ENCODE measurements at regions of chr6 and their contacts with region 1.

Region 1: DNA sequence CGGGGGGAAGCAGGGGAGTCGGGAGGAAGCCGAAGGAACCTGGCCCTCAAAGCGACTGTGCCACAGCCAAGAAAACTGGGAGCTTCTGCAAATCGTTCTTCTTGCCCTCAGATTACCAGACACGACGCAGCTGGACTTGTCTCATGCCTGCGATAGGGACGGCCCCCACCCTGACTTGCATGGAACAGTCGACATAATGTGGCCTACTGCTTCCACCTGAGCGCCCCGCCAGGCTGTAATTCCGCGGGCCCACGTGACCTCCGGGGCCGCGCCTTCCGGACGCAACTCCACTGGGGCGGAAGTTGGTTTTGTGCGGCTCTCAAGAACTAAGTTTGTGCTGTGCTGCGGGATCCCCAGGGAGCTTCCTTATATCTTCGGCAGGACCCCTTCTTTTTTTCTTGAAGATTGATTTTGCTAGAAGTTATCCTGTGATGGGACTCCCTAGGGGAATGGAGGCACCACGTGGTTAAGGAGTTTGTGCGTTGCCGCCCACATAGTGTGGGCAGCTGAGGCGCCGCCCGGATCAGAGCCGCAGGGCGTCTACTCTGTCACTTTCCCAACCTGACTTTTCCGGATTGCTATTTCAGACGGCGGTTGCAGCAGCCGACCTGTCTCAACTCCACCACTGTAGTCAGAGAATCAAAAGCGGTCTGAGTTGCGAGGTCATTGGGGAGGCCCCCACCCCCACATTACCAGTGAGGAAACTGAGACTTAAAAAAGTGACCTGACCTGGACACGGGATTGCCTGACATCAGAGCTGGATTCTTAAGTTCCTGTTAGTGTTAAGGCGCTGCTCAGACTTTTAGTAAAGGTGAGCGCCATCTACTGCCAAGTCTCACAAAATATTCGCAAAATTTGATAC is 540 bp upstream of the CD164 start:
- DNase-seq: peak; percentile 94
- H3K4me3 ChIP-seq: peak overlapping the region; percentile 50 to 95 (median 83)
- H3K27ac ChIP-seq: peak overlapping the region; percentile 93
- H3K4me1 ChIP-seq: peaks cover 31% of the 10 kb centered on the region
- H3K27me3 ChIP-seq: peaks cover 0 to 3% of the 10 kb centered on the region in 2 experiments
- CTCF ChIP-seq: peak in 1 of 2 donors; percentile 38
- POLR2A ChIP-seq: peak; percentile 87

Region 2: DNA sequence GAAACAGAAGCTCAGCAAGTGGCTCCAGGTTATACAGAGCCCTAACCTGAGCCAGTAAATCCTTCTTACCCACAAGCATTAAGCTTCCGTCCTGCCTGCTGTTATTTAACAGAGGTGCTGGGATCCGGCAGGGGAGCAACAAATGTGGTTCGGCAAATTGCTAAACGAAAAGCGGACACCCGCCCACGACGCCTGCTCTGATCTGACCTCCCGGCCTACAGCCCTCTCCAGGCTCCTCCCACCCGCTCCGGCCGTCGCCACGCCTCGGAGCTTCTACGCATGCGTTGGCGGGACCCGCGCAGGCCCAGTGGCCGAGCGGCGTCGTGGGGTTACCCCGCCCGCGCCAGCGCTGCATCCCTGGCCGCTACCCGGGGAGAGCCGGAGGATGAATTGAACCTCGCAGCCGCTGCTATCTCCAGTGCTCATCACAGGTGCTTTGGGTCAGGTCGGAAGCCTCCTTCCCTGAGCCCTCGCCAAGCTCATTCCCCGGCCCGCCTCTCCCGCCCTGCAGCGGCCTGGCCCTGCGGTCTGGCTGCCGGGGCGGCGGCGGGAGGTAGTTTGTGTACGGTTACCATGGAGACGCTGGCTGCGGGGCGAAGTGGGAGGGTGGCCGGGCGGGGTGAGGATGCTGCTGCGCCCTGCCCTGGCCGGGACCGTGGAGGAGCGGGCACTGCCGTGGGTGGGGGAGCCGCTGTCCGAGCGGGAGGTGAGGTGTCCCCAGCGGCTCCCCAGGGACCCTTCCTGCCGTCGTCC is 534.5 kb before region 1 on chr6 and contains the start of gene ARMC2:
- CTCF ChIA-PET with region 1: no interaction called
- POLR2A ChIA-PET with region 1: no interaction called
- dilution Hi-C with region 1: no loop called
- intact Hi-C with region 1: loop called (anchors 10 kb)
- DNase-seq: peak; percentile 89
- H3K4me3 ChIP-seq: peak within 1 kb of the TSS; percentile 34 to 81 (median 62)
- H3K27ac ChIP-seq: peak within 1 kb of the TSS; percentile 19
- H3K4me1 ChIP-seq: peaks cover 6% of the 10 kb centered on the region
- H3K27me3 ChIP-seq: no peaks in the 10 kb centered on the region
- CTCF ChIP-seq: no peak
- POLR2A ChIP-seq: peak; percentile 67
- total RNA-seq, gene ARMC2: 3.7 and 3.9 TPM in 2 replicates

Region 3: DNA sequence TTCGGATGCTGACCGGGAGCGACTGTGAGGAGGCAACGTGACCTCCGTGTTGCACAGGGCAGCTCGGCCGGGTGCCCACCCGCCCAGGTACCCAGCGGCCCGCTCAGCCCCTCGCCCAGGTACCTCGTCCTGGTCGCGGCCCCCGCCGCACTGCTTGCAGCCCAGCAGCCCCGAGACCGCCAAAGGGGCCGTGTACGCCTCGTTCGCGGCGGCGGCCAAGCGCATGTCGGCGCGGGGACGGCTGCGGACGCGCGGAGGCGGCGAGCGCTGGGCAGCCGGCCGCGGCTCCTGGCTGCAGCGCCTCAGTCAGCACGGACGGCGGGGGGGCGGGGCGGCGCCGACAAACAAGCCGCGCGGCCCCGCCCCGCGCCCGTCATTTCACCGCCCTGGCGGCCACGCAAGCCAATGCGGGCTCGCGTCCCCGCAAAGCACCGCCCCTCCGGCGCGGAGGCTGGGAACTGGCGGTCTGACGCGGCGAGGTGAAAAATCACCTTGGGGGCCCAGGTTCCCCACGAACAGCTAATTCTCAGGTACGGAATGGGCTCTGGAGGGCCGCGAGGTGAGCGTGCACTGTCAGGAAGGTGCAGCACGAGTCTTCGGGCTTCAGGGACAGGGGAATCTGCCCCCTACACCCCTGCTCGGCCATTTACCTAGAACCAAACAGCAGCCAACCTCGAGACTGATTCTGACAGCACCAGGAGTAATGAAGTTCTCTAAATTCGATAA is 373.4 kb before region 1 on chr6:
- CTCF ChIA-PET with region 1: no interaction called
- POLR2A ChIA-PET with region 1: no interaction called
- dilution Hi-C with region 1: no loop called
- intact Hi-C with region 1: loop called (anchors 1 kb)
- DNase-seq: peak; percentile 86
- H3K4me3 ChIP-seq: peak overlapping the region; percentile 63 to 95 (median 92)
- H3K27ac ChIP-seq: peak overlapping the region; percentile 41
- H3K4me1 ChIP-seq: peaks cover 6% of the 10 kb centered on the region
- H3K27me3 ChIP-seq: no peaks in the 10 kb centered on the region
- CTCF ChIP-seq: no peak
- POLR2A ChIP-seq: peak; percentile 75

Region 4: GRCh38 chr6:109187399-109188114 is 195.2 kb before region 1 on chr6:
- CTCF ChIA-PET with region 1: interaction called, 90 read pairs
- POLR2A ChIA-PET with region 1: no interaction called
- dilution Hi-C with region 1: no loop called
- intact Hi-C with region 1: loop called (anchors 1 kb)
- DNase-seq: peak; percentile 44
- H3K4me3 ChIP-seq: no peak overlapping the region
- H3K27ac ChIP-seq: no peak overlapping the region
- H3K4me1 ChIP-seq: no peaks in the 10 kb centered on the region
- H3K27me3 ChIP-seq: peaks cover 23 to 45% of the 10 kb centered on the region in 2 experiments
- CTCF ChIP-seq: peak; percentile 77 to 78
- POLR2A ChIP-seq: no peak

Region 5: GRCh38 chr6:109397020-109397419 is 14.2 kb after region 1 on chr6:
- CTCF ChIA-PET with region 1: interaction called, 24 read pairs
- POLR2A ChIA-PET with region 1: interaction called, 3 read pairs
- dilution Hi-C with region 1: no loop called
- intact Hi-C with region 1: no loop called
- DNase-seq: peak; percentile 35
- H3K4me3 ChIP-seq: no peak overlapping the region
- H3K27ac ChIP-seq: no peak overlapping the region
- H3K4me1 ChIP-seq: no peaks in the 10 kb centered on the region
- H3K27me3 ChIP-seq: no peaks in the 10 kb centered on the region
- CTCF ChIP-seq: no peak
- POLR2A ChIP-seq: no peak

Region 6: GRCh38 chr6:109482905-109483735 is 100.3 kb after region 1 on chr6 and contains the start of gene ZBTB24:
- CTCF ChIA-PET with region 1: no interaction called
- POLR2A ChIA-PET with region 1: no interaction called
- dilution Hi-C with region 1: no loop called
- intact Hi-C with region 1: loop called (anchors 2 kb)
- DNase-seq: peak; percentile 79
- H3K4me3 ChIP-seq: peak within 1 kb of the TSS; percentile 55 to 95 (median 93)
- H3K27ac ChIP-seq: peak within 1 kb of the TSS; percentile 78
- H3K4me1 ChIP-seq: peaks cover 26% of the 10 kb centered on the region
- H3K27me3 ChIP-seq: peaks cover 8 to 13% of the 10 kb centered on the region in 2 experiments
- CTCF ChIP-seq: no peak
- POLR2A ChIP-seq: peak; percentile 70
- total RNA-seq, gene ZBTB24: 6.2 and 6.4 TPM in 2 replicates

Region 7: GRCh38 chr6:110179401-110180227 is 796.8 kb after region 1 on chr6 and contains the start of gene WASF1:
- CTCF ChIA-PET with region 1: no interaction called
- POLR2A ChIA-PET with region 1: no interaction called
- dilution Hi-C with region 1: no loop called
- intact Hi-C with region 1: loop called (anchors 2 kb)
- DNase-seq: peak; percentile 99
- H3K4me3 ChIP-seq: peak within 1 kb of the TSS; percentile 61 to 94 (median 92)
- H3K27ac ChIP-seq: peak within 1 kb of the TSS; percentile 87
- H3K4me1 ChIP-seq: peaks cover 30% of the 10 kb centered on the region
- H3K27me3 ChIP-seq: no peaks in the 10 kb centered on the region
- CTCF ChIP-seq: no peak
- POLR2A ChIP-seq: peak; percentile 63
- total RNA-seq, gene WASF1: 20.9 and 23.2 TPM in 2 replicates

Measured in endothelial cell of umbilical vein (primary cell).